ENCODE measurements at regions of chr6 and their contacts with region 1.

Region 1: DNA sequence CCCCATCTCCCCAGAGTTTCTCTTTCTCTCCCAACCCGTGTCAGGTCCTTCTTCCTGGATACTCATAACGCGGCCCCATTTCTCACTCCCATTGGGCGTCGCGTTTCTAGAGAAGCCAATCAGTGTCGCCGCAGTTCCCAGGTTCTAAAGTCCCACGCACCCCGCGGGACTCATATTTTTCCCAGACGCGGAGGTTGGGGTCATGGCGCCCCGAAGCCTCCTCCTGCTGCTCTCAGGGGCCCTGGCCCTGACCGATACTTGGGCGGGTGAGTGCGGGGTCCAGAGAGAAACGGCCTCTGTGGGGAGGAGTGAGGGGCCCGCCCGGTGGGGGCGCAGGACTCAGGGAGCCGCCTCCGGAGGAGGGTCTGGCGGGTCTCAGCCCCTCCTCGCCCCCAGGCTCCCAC is at the start of gene HLA-F:
- DNase-seq: peak; percentile 79 to 92
- ATAC-seq: peak; percentile 96 to 99 (median 98)
- H3K4me3 ChIP-seq: peak within 1 kb of the TSS; percentile 87 to 99 (median 94)
- H3K27ac ChIP-seq: peak within 1 kb of the TSS; percentile 76 to 99 (median 97)
- H3K4me1 ChIP-seq: peaks cover 0 to 37% (median 23%) of the 10 kb centered on the region in 9 donors
- H3K27me3 ChIP-seq: no peaks in the 10 kb centered on the region
- CTCF ChIP-seq: peak in 2 of 9 donors; percentile 8 to 10
- total RNA-seq, gene HLA-F: 24.0 to 191 (median 31.6) TPM

Region 2: DNA sequence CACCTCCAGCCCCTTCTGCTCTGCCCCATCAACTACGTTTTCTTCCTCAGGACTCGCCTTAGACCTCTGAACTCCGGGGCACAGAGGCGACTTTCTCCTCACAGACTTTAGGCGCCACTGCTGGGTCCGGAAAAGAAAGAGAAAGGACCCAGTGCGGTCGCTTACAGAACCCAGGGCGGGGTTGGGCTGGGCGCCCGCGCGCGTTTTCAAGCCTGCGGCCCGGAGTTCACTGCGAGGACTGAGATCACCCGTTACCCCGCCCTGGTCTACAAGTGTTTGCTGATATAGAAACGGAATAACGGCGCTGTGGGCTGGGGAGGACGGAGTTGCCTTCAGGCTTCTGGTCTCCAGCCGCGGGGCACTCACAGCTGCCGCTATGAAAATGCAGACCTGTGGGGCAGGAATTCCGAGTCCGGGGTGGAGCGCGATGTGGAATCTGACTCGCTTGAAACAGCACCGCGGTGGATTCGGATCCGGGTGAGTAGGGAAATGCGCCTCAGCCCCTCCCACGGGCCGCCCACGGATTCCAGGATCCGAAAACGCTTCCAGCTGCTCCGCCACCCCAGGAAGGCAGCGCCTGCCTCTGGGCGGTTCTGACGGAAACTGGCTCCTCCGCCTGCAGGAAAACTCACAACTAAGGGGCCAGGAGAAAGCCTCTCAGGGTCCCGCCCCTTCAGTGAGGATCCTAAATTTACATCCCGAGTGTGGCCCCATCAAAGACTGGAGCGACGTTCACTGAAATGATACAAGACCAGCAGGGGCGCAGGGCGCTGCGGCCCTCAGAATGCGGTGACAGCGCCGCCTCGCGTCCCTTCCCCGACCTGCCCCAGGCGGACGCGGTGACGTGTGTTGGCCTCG is 29.4 kb after region 1 on chr6:
- intact Hi-C with region 1: loop called in 2 of 10 experiments (anchors 1 to 2 kb)
- DNase-seq: peak; percentile 89 to 90
- ATAC-seq: peak; percentile 84 to 91 (median 86)
- H3K4me3 ChIP-seq: peak overlapping the region; percentile 37 to 82 (median 73)
- H3K27ac ChIP-seq: peak overlapping the region; percentile 75 to 98 (median 96)
- H3K4me1 ChIP-seq: peaks cover 9 to 36% (median 32%) of the 10 kb centered on the region in 9 donors
- H3K27me3 ChIP-seq: no peaks in the 10 kb centered on the region
- CTCF ChIP-seq: peak; percentile 87 to 99 (median 93)

Region 3: GRCh38 chr6:29816030-29816429 is 92.8 kb after region 1 on chr6:
- intact Hi-C with region 1: no loop called
- DNase-seq: no peak
- ATAC-seq: no peak
- H3K4me3 ChIP-seq: no peak overlapping the region
- H3K27ac ChIP-seq: no peak overlapping the region
- H3K4me1 ChIP-seq: no peaks in the 10 kb centered on the region
- H3K27me3 ChIP-seq: peaks cover 0 to 31% (median 12%) of the 10 kb centered on the region in 7 donors
- CTCF ChIP-seq: no peak